Dorsolateral prefrontal cortex (tissue), 120 donors: ENCODE measurements at regions of chr16 and their contacts with region 1.

Region 1: GRCh38 chr16:22898874-22899348 is 84.9 kb downstream of the HS3ST2 start:
- DNase-seq: peak; percentile 52 to 85 (median 82)
- H3K4me3 ChIP-seq: peak overlapping the region in 12 of 59 donors; percentile 8 to 47 (median 28)
- H3K27ac ChIP-seq: peak overlapping the region in 5 of 59 donors; percentile 1 to 50 (median 18)
- H3K27me3 ChIP-seq: peaks cover 0 to 10% (median 0%) of the 10 kb centered on the region in 45 donors
- CTCF ChIP-seq: peak; percentile 76 to 99 (median 94)

Region 2: DNA sequence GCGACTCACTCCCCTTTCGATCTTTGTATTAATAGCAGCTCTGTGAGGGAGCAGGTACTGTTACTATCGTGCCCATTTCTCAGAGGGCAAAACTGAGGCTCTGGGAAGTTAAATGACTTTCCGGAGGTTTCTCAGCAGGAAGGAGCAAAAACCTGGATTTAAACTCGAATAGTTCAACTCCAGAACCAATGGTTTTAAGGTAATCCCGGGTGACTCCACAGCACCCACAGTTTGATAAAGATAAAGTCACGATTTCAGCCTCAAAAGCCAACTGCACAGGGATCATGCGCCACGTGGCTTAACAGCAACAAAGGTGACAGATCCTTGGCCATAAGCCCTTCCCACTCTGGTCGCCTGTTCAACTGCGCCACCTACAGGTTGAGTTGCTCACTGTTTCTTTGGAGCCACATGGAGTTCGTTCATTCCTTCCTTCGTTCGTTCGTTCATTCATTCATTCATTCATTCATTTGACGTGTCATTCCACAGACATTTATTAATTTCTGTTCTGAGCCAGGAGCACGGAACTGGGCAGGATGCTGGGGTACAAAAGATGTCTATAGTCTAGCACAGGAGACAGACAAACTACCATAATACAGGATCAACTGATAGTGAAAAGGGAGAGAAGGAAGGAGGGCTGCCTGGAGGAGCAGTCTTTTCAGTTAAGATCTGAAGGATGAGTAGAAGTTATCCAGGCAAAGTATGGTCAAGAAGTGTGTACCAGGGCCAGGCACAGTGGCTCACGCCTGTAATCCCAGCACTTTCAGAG is 49.9 kb after region 1 on chr16:
- intact Hi-C with region 1: loop called in 1 of 2 experiments (anchors 5 kb)
- DNase-seq: peak in 9 of 10 donors; percentile 38 to 75 (median 59)
- H3K4me3 ChIP-seq: peak overlapping the region; percentile 29 to 70 (median 52)
- H3K27ac ChIP-seq: peak overlapping the region in 5 of 59 donors; percentile 27 to 64 (median 48)
- H3K27me3 ChIP-seq: no peaks in the 10 kb centered on the region
- CTCF ChIP-seq: peak; percentile 60 to 91 (median 76)

Region 3: DNA sequence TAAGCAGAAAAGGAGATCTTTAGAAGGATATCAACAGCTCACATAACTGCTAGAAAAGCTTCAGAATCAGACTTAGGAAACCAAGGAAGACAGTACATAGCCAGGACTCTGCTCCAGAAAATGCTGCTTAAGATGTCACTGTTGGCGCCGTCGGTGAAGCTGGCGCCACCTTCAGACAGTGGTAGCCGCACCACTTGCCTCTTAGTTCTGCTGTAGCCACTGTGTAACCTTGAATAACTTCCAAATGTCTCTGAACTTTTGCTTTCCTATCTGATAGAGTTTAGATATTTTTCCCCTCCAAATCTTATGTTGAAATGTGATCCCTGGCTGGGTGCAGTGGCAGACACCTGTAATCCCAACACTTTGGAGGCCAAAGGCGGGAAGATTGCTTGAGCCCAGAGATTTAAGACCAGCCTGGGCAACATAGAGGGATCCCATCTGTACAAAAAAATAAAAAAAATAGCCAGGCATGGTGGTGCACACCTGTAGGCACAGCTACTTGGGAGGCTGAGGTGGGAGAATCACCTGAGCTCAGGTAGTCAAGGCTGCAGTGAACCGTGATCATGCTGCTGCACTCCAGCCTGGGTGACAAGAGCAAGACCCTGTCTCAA is 256.6 kb after region 1 on chr16:
- intact Hi-C with region 1: loop called in 1 of 2 experiments (anchors 10 kb)
- DNase-seq: no peak
- H3K4me3 ChIP-seq: no peak overlapping the region
- H3K27ac ChIP-seq: no peak overlapping the region
- H3K27me3 ChIP-seq: no peaks in the 10 kb centered on the region
- CTCF ChIP-seq: peak in 31 of 56 donors; percentile 10 to 59 (median 34)